ENCODE measurements at regions of chrX and their contacts with region 1.

Region 1: DNA sequence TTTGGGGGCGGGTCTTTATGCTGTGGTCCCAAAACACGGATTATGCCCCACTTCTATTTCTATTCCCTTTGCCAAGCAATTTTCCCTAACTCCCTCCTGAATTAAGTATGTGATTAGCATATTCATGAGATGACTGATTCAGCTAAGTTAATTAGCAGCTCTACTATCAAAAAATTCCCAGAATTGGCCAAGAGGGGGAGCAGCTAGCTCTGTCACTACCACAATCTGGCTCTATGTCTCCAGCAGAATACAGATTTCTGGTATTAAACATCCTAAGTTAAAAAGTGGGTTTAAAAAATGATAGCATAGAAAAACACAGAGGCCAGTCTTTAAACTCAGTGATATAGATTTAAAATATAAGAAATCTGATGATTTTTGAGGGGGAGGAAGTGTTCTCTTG is 80.3 kb downstream of the GPC4 start:
- DNase-seq: peak; percentile 13
- H3K4me3 ChIP-seq: no peak overlapping the region
- H3K27ac ChIP-seq: no peak overlapping the region
- H3K4me1 ChIP-seq: no peaks in the 10 kb centered on the region
- H3K27me3 ChIP-seq: no peaks in the 10 kb centered on the region
- CTCF ChIP-seq: peak; percentile 36 to 51 (median 41)
- EP300 ChIP-seq: no peak
- POLR2A ChIP-seq: no peak

Region 2: DNA sequence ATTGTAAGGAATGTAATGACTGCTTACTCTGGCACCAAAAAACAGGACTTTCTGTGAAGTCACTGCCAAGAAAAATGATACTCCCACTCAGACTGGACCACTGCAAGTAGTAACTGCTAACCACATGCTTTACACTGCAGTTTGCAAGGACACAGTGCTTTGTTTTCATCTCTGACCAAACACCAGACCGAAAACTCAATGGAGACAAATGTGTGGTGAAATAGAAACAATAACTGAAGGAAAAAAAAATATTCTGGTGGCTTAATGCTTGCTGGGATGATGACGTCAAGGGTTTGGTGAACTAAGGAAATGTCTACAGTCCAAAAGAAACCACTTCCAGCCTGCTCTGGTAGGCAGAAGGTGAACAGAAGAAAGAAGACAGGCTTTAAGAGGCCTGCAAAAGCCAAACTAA is 67.0 kb after region 1 on chrX:
- in situ Hi-C with region 1: no loop called
- intact Hi-C with region 1: no loop called
- DNase-seq: no peak
- H3K4me3 ChIP-seq: no peak overlapping the region
- H3K27ac ChIP-seq: peak overlapping the region in 3 of 4 donors; percentile 13 to 35 (median 28)
- H3K4me1 ChIP-seq: peaks cover 0 to 3% (median 0%) of the 10 kb centered on the region in 4 donors
- H3K27me3 ChIP-seq: no peaks in the 10 kb centered on the region
- CTCF ChIP-seq: no peak
- EP300 ChIP-seq: no peak
- POLR2A ChIP-seq: no peak

Region 3: DNA sequence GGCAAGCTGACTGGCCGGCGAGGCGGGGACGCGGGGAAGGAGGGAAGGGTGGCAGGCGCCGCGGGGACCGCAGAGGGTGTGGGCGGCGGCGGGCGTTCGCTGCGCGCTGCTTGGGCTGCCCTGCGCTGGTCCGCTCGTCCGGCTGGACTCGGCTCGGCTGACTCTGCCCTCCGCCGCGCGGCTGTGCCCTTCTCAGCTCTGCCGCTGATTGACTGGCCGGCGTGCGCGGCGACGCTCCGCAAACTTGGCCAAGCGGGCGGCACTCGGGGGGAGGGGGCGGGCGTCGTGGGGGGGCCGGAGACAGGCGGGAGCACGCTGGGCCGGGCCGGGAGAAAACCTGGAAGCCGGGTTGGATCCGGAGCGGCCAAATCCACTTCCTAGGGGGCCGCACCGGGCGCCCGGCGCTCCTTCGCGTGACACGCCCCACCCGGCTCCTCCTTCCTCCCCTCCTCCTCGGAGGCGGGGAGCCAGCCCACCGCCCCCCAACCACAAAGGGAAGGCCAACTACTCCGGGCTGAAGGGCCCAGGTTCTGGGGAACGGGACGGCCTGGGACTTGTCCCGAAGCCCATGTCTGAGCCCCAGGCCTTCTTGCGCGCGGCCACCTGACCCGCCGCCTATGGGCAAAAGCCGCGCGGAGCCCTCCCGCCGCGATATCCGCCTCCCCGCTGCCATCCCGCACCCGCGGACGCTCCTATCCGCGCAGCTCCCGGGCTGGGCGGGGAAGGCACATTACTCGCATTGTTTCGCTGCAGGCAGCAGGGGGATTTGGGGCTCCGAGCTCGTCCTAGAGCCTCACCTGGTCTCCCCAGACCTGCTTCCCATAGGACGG is 80.5 kb after region 1 on chrX and contains the start of gene GPC4:
- in situ Hi-C with region 1: no loop called
- intact Hi-C with region 1: loop called (anchors 10 kb)
- DNase-seq: peak; percentile 76
- H3K4me3 ChIP-seq: peak within 1 kb of the TSS; percentile 47 to 66 (median 60)
- H3K27ac ChIP-seq: peak within 1 kb of the TSS; percentile 84 to 89 (median 86)
- H3K4me1 ChIP-seq: peaks cover 0 to 4% (median 0%) of the 10 kb centered on the region in 4 donors
- H3K27me3 ChIP-seq: no peaks in the 10 kb centered on the region
- CTCF ChIP-seq: peak in 3 of 5 experiments; percentile 9 to 30 (median 10)
- EP300 ChIP-seq: no peak
- POLR2A ChIP-seq: peak; percentile 49
- total RNA-seq, gene GPC4: 7.8 to 15.7 (median 12.7) TPM

Region 4: DNA sequence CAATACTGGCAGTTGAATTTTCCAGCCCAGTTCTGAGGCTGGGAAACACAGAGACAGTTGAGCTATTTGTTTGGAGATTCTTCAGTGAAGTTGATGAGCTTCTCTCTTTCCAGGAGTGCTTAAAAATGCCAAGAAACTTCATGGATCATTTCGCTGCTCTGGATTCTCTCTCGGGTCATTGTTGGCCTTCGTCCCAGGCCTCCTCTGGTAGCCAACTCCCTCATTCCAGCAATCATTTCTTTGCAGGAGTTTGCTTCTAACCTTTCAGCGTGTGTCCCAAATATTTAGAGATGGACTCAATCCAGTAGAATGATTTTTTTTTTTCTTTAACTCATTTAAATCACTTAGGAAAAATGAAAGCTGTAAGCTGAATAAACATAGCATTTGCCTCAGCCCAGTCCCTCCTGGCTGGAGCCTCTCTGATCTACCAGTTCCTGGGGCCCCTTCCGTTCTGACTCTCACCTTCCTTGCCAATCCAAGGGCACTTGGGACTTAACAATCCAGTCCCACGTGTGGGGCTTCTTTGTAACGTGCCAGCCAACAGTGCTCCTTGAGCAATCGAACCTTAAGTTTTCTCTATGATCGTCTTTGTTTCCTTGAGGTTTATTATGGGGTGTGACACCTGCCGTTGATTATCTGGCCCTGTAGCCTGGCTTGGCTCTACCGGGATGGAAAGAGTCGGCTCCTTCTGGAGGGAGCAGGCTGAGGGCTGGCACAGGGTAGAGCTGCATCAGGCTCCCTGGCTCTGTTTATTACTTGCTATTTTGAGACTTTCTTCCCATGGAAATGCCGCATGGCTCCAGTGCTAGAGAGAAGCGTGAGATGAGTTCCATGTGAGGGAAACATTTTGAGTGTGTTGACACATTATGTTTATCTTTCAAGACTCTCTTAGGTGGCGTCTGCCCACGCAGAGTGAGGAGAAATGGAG is 160.7 kb after region 1 on chrX:
- in situ Hi-C with region 1: loop called in 1 of 4 experiments (anchors 25 kb)
- intact Hi-C with region 1: no loop called
- DNase-seq: peak; percentile 63
- H3K4me3 ChIP-seq: no peak overlapping the region
- H3K27ac ChIP-seq: peak overlapping the region; percentile 72 to 78 (median 74)
- H3K4me1 ChIP-seq: peaks cover 0 to 13% (median 6%) of the 10 kb centered on the region in 4 donors
- H3K27me3 ChIP-seq: no peaks in the 10 kb centered on the region
- CTCF ChIP-seq: no peak
- EP300 ChIP-seq: no peak
- POLR2A ChIP-seq: peak; percentile 8

Region 5: GRCh38 chrX:133670383-133670782 is 335.4 kb after region 1 on chrX:
- in situ Hi-C with region 1: loop called in 2 of 4 experiments (anchors 10 to 25 kb)
- intact Hi-C with region 1: no loop called
- DNase-seq: no peak
- H3K4me3 ChIP-seq: no peak overlapping the region
- H3K27ac ChIP-seq: no peak overlapping the region
- H3K4me1 ChIP-seq: peaks cover 0 to 4% (median 0%) of the 10 kb centered on the region in 4 donors
- H3K27me3 ChIP-seq: no peaks in the 10 kb centered on the region
- CTCF ChIP-seq: peak; percentile 61 to 72 (median 64)
- EP300 ChIP-seq: no peak
- POLR2A ChIP-seq: no peak

Measured in transverse colon (tissue), 4 donors.